CD4-positive, alpha-beta T cell (primary cell): ENCODE measurements at regions of chr16 and their contacts with region 1.

Region 1: DNA sequence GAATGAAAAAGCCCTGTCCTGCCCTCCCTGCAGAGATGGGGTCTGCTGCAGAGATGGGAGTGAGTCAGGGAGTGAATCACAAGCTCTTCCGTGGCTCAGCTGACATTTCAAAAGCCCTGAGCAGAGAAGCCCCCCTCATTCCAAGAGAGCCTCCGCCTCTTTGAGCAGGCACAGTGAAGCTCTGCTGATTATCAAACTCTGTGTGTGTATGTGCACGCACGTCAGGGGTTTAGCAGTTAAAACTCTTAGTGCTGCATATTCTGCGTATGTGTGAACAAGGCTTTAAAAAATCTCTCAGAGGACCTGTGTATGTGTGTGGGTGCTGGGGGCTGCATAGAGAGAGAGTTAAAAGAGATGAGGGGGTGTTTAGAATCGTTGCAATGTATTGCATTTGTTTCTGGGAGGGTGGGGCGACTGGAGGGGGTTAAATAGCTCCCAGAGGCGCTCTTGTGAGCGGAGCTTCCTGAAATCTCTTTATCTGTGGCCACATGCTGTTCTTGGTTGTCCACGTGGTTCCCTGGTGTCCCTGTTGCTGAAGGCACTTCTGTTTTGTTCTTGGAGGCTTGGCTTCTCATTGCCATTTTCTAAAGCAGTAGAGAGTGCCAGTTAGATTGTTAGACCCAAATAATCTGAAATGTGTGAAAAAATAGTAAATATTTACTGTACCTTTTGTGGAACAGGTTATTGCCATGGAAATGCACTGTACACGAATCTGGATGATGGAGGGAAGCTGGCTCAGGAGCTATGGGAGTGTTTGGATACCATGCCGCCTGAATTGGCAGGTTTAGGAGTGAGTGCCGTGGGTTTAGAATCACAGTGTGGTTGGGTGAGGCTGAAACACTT is 116.6 kb downstream of the PRKCB start:
- DNase-seq: peak in 7 of 14 experiments; percentile 16 to 71 (median 32)
- ATAC-seq: peak; percentile 14
- H3K4me3 ChIP-seq: no peak overlapping the region
- H3K4me3 Mint-ChIP-seq: peak overlapping the region; percentile 75
- H3K27ac ChIP-seq: peak overlapping the region in 1 of 2 donors; percentile 79
- H3K27ac Mint-ChIP-seq: peak overlapping the region; percentile 89
- H3K4me1 ChIP-seq: peaks cover 74% of the 10 kb centered on the region
- H3K4me1 Mint-ChIP-seq: peaks cover 87% of the 10 kb centered on the region
- H3K27me3 ChIP-seq: no peaks in the 10 kb centered on the region
- H3K27me3 Mint-ChIP-seq: no peaks in the 10 kb centered on the region
- CTCF ChIP-seq: no peak

Region 2: GRCh38 chr16:23452572-23453337 is 499.6 kb before region 1 on chr16 and contains the start of gene COG7:
- CTCF ChIA-PET with region 1: no interaction called
- POLR2A ChIA-PET with region 1: no interaction called
- intact Hi-C with region 1: no loop called
- DNase-seq: peak; percentile 74 to 88 (median 78)
- ATAC-seq: peak; percentile 89
- H3K4me3 ChIP-seq: peak within 1 kb of the TSS; percentile 93
- H3K4me3 Mint-ChIP-seq: peak within 1 kb of the TSS; percentile 94
- H3K27ac ChIP-seq: peak within 1 kb of the TSS in 1 of 2 donors; percentile 13
- H3K27ac Mint-ChIP-seq: peak within 1 kb of the TSS; percentile 79
- H3K4me1 ChIP-seq: peaks cover 15% of the 10 kb centered on the region
- H3K4me1 Mint-ChIP-seq: peaks cover 40% of the 10 kb centered on the region
- H3K27me3 ChIP-seq: no peaks in the 10 kb centered on the region
- H3K27me3 Mint-ChIP-seq: no peaks in the 10 kb centered on the region
- CTCF ChIP-seq: no peak
- total RNA-seq, gene COG7: 12.6 to 13.6 TPM

Region 3: DNA sequence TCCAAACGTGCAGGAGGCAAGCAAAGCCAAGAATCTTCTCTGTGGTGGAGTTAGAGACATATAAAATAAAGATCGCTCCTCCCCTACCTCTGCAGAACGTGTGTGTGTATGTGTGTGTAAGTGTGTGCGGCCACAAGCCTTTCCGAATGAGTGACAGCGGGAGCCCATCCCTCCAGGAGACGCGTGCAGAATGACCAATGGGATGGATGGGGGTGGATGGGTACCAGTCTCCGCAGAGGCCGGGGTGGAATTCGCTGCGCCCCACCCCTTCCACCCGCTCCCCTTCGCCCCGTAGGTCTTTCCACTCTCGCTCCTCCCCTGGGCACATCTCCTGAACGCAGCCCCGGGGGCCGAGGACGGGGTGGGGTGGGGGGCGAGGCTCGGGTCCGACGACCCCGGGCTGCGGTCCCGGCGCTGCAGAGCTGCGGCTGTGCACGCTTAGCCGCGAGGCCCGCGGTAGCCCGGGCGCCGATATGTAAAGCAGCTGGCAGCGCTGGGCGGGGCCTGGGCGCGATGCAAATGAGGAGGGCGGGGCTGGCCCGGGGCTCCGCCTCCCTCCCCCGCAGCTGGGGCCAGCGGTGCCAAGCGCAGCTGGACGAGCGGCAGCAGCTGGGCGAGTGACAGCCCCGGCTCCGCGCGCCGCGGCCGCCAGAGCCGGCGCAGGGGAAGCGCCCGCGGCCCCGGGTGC is 116.8 kb before region 1 on chr16 and contains the start of gene PRKCB:
- CTCF ChIA-PET with region 1: no interaction called
- POLR2A ChIA-PET with region 1: interaction called, 4 read pairs
- intact Hi-C with region 1: loop called (anchors 5 kb)
- DNase-seq: peak; percentile 79 to 95 (median 88)
- ATAC-seq: peak; percentile 86
- H3K4me3 ChIP-seq: peak within 1 kb of the TSS; percentile 82
- H3K4me3 Mint-ChIP-seq: peak within 1 kb of the TSS; percentile 99
- H3K27ac ChIP-seq: peak within 1 kb of the TSS; percentile 18 to 59
- H3K27ac Mint-ChIP-seq: peak within 1 kb of the TSS; percentile 85
- H3K4me1 ChIP-seq: peaks cover 57% of the 10 kb centered on the region
- H3K4me1 Mint-ChIP-seq: peaks cover 66% of the 10 kb centered on the region
- H3K27me3 ChIP-seq: no peaks in the 10 kb centered on the region
- H3K27me3 Mint-ChIP-seq: no peaks in the 10 kb centered on the region
- CTCF ChIP-seq: no peak
- total RNA-seq, gene PRKCB: 64.7 TPM

Region 4: DNA sequence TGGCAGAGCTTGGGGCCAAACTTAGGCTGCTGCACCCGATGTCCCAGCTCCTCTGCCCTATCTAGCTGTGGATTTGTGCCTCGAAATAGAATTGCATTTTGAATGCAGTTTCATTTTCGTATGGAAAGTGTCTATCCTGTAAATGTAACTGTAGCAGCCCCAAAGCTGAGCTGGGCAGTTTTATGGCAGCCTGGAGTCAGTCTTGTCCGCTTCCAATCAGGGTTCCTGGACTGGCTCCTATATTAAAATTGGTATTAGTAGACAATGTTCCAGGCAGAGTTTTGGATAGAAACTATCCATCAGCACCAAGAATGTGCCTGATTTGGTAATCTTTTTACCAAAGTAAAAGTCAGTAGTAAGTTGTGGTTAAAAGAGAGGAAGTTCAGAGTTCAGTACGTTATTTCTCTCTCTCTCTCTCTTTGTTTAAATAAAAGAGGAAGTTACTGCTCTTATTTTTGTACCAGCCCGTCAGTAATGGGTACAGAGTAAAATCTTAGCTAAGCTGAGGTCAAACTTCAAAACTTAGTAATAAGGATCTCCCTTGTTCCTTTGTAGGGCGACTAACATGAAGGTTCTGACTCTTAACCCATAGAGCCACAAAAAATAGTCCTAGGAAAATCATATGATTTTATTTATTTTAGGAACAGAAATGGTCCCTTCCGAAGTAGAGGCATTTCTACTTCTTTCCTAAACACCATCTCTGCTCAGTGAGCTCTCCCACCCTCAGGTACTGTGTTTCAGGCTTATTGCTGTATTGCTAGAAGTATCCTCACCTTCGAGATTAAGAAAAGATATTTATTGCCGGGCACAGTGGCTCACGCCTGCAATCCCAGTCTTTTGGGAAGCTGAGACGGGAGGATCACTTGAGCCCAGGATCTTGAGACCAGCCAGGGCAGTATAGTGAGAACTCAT is 88.6 kb before region 1 on chr16:
- CTCF ChIA-PET with region 1: no interaction called
- POLR2A ChIA-PET with region 1: interaction called, 8 read pairs
- intact Hi-C with region 1: loop called in 1 of 2 experiments (anchors 5 kb)
- DNase-seq: peak in 4 of 14 experiments; percentile 7 to 79 (median 64)
- ATAC-seq: peak; percentile 88
- H3K4me3 ChIP-seq: peak overlapping the region; percentile 43
- H3K4me3 Mint-ChIP-seq: peak overlapping the region; percentile 88
- H3K27ac ChIP-seq: peak overlapping the region; percentile 39 to 69
- H3K27ac Mint-ChIP-seq: peak overlapping the region; percentile 90
- H3K4me1 ChIP-seq: peaks cover 61% of the 10 kb centered on the region
- H3K4me1 Mint-ChIP-seq: peaks cover 86% of the 10 kb centered on the region
- H3K27me3 ChIP-seq: no peaks in the 10 kb centered on the region
- H3K27me3 Mint-ChIP-seq: no peaks in the 10 kb centered on the region
- CTCF ChIP-seq: no peak

Region 5: GRCh38 chr16:23877107-23878090 is 75.0 kb before region 1 on chr16:
- CTCF ChIA-PET with region 1: interaction called, 4 read pairs
- POLR2A ChIA-PET with region 1: interaction called, 4 read pairs
- intact Hi-C with region 1: loop called in 1 of 2 experiments (anchors 5 kb)
- DNase-seq: peak in 8 of 14 experiments; percentile 9 to 47 (median 22)
- ATAC-seq: peak; percentile 44
- H3K4me3 ChIP-seq: no peak overlapping the region
- H3K4me3 Mint-ChIP-seq: no peak overlapping the region
- H3K27ac ChIP-seq: no peak overlapping the region
- H3K27ac Mint-ChIP-seq: peak overlapping the region; percentile 49
- H3K4me1 ChIP-seq: peaks cover 26% of the 10 kb centered on the region
- H3K4me1 Mint-ChIP-seq: peaks cover 77% of the 10 kb centered on the region
- H3K27me3 ChIP-seq: no peaks in the 10 kb centered on the region
- H3K27me3 Mint-ChIP-seq: no peaks in the 10 kb centered on the region
- CTCF ChIP-seq: peak; percentile 41

Region 6: GRCh38 chr16:23905027-23905426 is 47.3 kb before region 1 on chr16:
- CTCF ChIA-PET with region 1: no interaction called
- POLR2A ChIA-PET with region 1: interaction called, 3 read pairs
- intact Hi-C with region 1: loop called in 1 of 2 experiments (anchors 10 kb)
- DNase-seq: no peak
- ATAC-seq: no peak
- H3K4me3 ChIP-seq: no peak overlapping the region
- H3K4me3 Mint-ChIP-seq: no peak overlapping the region
- H3K27ac ChIP-seq: no peak overlapping the region
- H3K27ac Mint-ChIP-seq: no peak overlapping the region
- H3K4me1 ChIP-seq: peaks cover 38% of the 10 kb centered on the region
- H3K4me1 Mint-ChIP-seq: peaks cover 89% of the 10 kb centered on the region
- H3K27me3 ChIP-seq: no peaks in the 10 kb centered on the region
- H3K27me3 Mint-ChIP-seq: no peaks in the 10 kb centered on the region
- CTCF ChIP-seq: no peak

Region 7: GRCh38 chr16:23999663-24000062 is 47.3 kb after region 1 on chr16:
- CTCF ChIA-PET with region 1: no interaction called
- POLR2A ChIA-PET with region 1: no interaction called
- intact Hi-C with region 1: loop called in 1 of 2 experiments (anchors 10 kb)
- DNase-seq: no peak
- ATAC-seq: no peak
- H3K4me3 ChIP-seq: no peak overlapping the region
- H3K4me3 Mint-ChIP-seq: no peak overlapping the region
- H3K27ac ChIP-seq: no peak overlapping the region
- H3K27ac Mint-ChIP-seq: peak overlapping the region; percentile 17
- H3K4me1 ChIP-seq: no peaks in the 10 kb centered on the region
- H3K4me1 Mint-ChIP-seq: peaks cover 27% of the 10 kb centered on the region
- H3K27me3 ChIP-seq: no peaks in the 10 kb centered on the region
- H3K27me3 Mint-ChIP-seq: no peaks in the 10 kb centered on the region
- CTCF ChIP-seq: no peak

Region 8: DNA sequence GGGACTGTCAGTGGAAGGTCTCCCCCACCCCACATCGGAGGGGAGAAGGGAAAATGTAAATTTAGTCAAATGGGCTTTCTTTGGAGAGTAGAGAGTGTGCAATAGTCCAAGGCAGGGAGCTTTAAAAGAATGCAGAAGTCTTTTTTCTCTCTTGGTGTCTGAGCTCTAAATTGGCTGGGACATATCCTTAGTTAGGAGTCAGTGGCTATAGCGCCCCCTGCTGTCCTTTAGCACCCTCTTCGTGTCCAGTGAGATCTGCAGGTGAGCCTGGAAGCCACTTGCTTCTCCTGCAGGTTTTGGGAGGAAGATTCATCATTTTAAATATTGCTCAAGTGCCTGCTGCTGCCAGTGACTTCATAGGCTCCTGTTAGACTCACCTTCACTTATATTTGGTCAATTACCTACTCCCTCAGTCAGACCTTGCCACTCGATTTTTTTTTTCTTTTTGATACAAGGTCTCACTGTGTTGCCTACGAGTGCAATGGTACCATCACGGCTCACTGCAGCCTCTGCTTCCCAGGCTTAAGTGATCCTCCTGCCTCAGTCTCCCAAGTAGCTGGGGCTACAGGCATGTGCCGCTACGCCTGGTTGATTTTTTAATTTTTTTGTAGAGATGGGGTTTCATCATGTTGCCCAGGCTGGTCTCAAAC is 58.2 kb after region 1 on chr16:
- CTCF ChIA-PET with region 1: no interaction called
- POLR2A ChIA-PET with region 1: interaction called, 5 read pairs
- intact Hi-C with region 1: loop called (anchors 5 to 10 kb)
- DNase-seq: peak; percentile 66 to 91 (median 78)
- ATAC-seq: peak; percentile 30
- H3K4me3 ChIP-seq: no peak overlapping the region
- H3K4me3 Mint-ChIP-seq: no peak overlapping the region
- H3K27ac ChIP-seq: no peak overlapping the region
- H3K27ac Mint-ChIP-seq: peak overlapping the region; percentile 67
- H3K4me1 ChIP-seq: peaks cover 43% of the 10 kb centered on the region
- H3K4me1 Mint-ChIP-seq: peaks cover 57% of the 10 kb centered on the region
- H3K27me3 ChIP-seq: no peaks in the 10 kb centered on the region
- H3K27me3 Mint-ChIP-seq: no peaks in the 10 kb centered on the region
- CTCF ChIP-seq: peak; percentile 84